Activated naive CD4-positive, alpha-beta T cell treated with anti-CD3 and anti-CD28 coated beads for 36 hours (primary cell): ENCODE measurements at regions of chr17 and their contacts with region 1.

Region 1: GRCh38 chr17:45247429-45248131 is 14.3 kb downstream of the SPATA32 start:
- DNase-seq: peak; percentile 99
- H3K4me3 Mint-ChIP-seq: peak overlapping the region; percentile 81
- H3K27ac Mint-ChIP-seq: peak overlapping the region; percentile 86
- H3K4me1 Mint-ChIP-seq: peaks cover 54% of the 10 kb centered on the region
- H3K27me3 Mint-ChIP-seq: no peaks in the 10 kb centered on the region

Region 2: DNA sequence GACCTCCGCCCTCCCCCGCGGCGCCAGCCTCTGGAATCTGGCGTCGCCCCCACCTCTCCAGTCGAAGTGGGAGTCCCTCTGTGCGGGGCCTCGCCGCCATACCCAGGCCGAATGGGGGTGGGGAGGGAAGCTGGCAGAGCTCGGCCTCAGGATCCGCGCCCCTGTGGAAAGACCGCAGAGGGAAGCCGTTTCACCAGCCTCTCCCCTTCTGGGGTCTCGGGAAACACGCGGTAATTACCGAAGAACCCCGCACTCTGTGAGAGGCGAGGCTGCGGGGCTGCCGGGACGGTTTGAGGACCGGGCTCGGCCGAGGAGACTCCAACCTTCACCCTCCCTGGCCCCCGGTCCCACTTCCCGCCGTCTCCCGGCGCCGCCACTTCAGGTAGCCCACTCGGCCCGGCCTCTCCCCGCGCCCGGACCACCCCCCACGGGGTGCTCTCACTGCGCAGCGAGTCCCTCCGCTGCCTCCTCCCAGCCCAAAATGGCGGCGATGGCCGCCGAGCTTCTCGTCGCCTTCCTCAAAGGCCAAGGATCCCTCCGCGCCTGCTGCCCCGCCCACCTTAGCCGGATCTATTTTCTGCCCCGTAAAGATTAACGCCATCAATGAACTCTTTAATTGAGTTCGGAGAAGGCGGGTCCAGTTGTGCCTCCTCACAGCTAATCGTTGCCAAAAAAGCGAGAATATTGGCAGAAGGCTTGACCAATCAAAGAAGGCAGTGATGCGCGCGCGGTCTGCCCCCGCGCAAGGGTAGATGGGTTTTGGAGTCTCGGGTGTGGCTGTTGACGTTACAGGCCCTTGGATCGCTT is 86.4 kb before region 1 on chr17:
- CTCF ChIA-PET with region 1: interaction called, 3 read pairs
- intact Hi-C with region 1: loop called (anchors 1 kb)
- DNase-seq: peak; percentile 99
- H3K4me3 Mint-ChIP-seq: peak overlapping the region; percentile 96
- H3K27ac Mint-ChIP-seq: peak overlapping the region; percentile 96
- H3K4me1 Mint-ChIP-seq: peaks cover 33% of the 10 kb centered on the region
- H3K27me3 Mint-ChIP-seq: no peaks in the 10 kb centered on the region

Region 3: DNA sequence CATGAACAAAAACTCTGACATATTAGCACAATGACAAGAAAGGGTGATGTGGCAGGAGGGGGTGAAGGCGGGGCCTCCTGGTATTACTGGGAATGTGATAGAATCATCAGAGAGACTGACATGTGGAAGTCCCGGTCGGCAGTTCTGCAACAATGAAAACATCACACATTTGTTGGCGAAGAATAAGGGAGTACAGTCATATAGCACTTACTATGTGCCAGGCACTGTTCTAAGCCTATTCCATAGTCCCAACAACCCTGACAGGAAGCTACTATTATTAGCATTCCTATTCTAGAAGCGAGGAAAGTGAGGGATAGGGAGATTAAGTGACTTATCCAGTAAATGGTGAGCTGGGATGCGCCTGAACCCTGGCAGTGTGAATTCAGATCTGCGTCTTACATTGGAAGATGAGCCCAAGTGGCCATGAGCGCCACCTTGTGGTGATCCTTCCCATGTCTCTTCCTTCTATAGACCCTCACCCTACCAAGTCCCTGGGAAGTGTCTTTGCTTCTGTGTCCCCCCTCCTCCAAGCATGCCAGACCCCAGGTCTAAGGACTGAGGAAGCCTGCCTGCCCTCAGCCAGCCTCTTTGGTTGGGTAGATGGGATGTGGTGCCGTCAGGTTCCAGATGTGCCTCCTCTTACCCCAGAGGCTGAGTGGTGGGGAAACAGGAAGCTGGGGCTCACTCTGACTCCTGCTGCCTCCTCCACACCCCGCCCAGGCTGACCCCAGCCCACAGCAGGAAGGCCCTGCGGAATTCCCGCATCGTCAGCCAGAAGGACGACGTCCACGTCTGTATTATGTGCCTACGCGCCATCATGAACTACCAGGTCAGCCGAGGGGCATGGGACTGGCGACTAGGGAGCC is 11.9 kb before region 1 on chr17:
- CTCF ChIA-PET with region 1: interaction called, 34 read pairs
- intact Hi-C with region 1: loop called (anchors 1 kb)
- DNase-seq: peak; percentile 89
- H3K4me3 Mint-ChIP-seq: no peak overlapping the region
- H3K27ac Mint-ChIP-seq: peak overlapping the region; percentile 89
- H3K4me1 Mint-ChIP-seq: peaks cover 50% of the 10 kb centered on the region
- H3K27me3 Mint-ChIP-seq: no peaks in the 10 kb centered on the region

Region 4: GRCh38 chr17:45261577-45262515 is 14.3 kb after region 1 on chr17 and contains the start of gene SPATA32:
- CTCF ChIA-PET with region 1: interaction called, 9 read pairs
- intact Hi-C with region 1: loop called (anchors 1 kb)
- DNase-seq: peak; percentile 79
- H3K4me3 Mint-ChIP-seq: peak within 1 kb of the TSS; percentile 81
- H3K27ac Mint-ChIP-seq: peak within 1 kb of the TSS; percentile 83
- H3K4me1 Mint-ChIP-seq: peaks cover 28% of the 10 kb centered on the region
- H3K27me3 Mint-ChIP-seq: no peaks in the 10 kb centered on the region
- total RNA-seq, gene SPATA32: 0.12 TPM in 1 of 2 experiments, not detected in the other

Region 5: DNA sequence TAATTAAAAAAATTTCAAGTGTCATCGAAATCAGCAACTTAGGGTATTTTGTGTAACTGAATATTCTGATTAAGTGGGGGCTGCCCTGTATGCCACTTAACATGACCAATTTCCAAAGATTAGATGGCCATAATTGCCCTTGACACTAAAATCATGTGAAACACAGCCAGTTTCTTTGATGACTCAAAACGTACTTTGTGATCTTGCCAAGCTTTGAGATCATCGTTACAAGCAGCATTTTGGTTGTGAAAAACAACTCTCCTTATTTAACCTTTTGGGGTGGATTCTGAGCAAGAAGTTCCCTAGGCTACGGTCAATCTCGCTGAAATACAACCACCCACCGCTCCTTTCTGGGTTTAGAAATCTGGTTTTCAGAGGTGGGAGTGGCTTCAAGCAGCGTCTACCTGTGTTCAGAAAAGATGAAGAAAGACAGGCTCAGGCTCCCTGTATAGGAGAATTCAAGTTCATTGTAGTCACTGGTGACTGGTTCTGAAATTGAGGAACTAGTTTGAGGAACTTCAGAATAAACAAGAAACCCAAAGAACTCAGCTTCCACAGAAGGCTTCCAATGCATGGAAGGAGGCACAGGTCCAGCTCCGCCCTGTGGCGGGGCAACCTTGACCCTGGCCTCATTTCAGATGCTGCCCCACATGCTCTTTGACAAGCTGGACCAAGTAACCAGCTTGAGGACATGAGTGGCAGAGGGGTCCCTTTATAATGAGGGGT is 59.9 kb after region 1 on chr17:
- CTCF ChIA-PET with region 1: interaction called, 3 read pairs
- intact Hi-C with region 1: loop called (anchors 1 kb)
- DNase-seq: peak; percentile 77
- H3K4me3 Mint-ChIP-seq: peak overlapping the region; percentile 48
- H3K27ac Mint-ChIP-seq: peak overlapping the region; percentile 91
- H3K4me1 Mint-ChIP-seq: peaks cover 87% of the 10 kb centered on the region
- H3K27me3 Mint-ChIP-seq: no peaks in the 10 kb centered on the region

Region 6: GRCh38 chr17:45320931-45321461 is 73.4 kb after region 1 on chr17:
- CTCF ChIA-PET with region 1: no interaction called
- intact Hi-C with region 1: no loop called
- DNase-seq: peak; percentile 49
- H3K4me3 Mint-ChIP-seq: no peak overlapping the region
- H3K27ac Mint-ChIP-seq: no peak overlapping the region
- H3K4me1 Mint-ChIP-seq: peaks cover 49% of the 10 kb centered on the region
- H3K27me3 Mint-ChIP-seq: no peaks in the 10 kb centered on the region